ENCODE measurements at regions of chr21 and their contacts with region 1.

Region 1: DNA sequence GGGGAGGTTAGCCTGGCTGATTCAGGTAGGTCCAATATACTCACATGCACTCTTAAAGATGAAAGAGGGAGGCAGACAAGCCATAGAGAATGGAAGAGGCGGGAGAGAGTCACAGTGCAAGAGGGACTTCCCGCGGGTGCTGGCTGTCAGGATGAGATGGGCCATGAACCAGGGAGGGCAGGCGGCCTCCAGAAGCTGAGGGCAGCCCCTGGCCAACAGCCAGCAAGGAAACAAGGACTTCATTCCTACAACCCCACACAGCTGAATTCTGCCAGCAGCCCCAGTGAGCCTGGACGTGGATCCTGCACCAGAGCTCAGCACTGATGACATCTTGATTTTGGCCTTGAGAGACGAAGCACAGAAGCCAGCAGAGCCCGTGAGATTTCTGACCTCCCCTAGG is 15.1 kb upstream of the B3GALT5 start:
- DNase-seq: no peak
- ATAC-seq: no peak
- H3K4me3 ChIP-seq: no peak overlapping the region
- H3K27ac ChIP-seq: no peak overlapping the region
- H3K4me1 ChIP-seq: no peaks in the 10 kb centered on the region
- H3K27me3 ChIP-seq: no peaks in the 10 kb centered on the region
- CTCF ChIP-seq: no peak
- POLR2A ChIP-seq: no peak
- RAD21 ChIP-seq: no peak

Region 2: DNA sequence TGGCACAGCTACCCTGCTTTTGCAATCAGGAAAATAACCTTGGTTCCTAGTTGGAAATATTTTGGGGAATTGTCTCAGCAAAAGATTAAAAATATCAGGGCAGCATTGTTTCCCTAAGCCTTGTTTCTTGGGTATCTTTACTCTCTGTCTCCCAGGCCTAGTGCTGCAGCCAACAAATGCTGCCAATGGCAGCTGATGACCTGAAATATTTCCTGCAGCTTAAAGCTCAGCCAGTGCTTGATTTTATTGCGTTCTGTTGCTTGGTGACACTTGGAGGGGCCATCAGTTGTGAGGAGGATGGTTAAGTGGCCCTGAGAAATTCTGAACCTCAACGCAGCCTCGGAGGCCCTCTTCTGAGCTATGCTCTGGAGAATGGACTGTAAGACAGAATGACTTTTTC is 44.3 kb before region 1 on chr21:
- CTCF ChIA-PET with region 1: no interaction called
- POLR2A ChIA-PET with region 1: no interaction called
- RAD21 ChIA-PET with region 1: no interaction called
- intact Hi-C with region 1: no loop called
- DNase-seq: no peak
- ATAC-seq: no peak
- H3K4me3 ChIP-seq: no peak overlapping the region
- H3K27ac ChIP-seq: no peak overlapping the region
- H3K4me1 ChIP-seq: no peaks in the 10 kb centered on the region
- H3K27me3 ChIP-seq: no peaks in the 10 kb centered on the region
- CTCF ChIP-seq: no peak
- POLR2A ChIP-seq: no peak
- RAD21 ChIP-seq: no peak

Region 3: DNA sequence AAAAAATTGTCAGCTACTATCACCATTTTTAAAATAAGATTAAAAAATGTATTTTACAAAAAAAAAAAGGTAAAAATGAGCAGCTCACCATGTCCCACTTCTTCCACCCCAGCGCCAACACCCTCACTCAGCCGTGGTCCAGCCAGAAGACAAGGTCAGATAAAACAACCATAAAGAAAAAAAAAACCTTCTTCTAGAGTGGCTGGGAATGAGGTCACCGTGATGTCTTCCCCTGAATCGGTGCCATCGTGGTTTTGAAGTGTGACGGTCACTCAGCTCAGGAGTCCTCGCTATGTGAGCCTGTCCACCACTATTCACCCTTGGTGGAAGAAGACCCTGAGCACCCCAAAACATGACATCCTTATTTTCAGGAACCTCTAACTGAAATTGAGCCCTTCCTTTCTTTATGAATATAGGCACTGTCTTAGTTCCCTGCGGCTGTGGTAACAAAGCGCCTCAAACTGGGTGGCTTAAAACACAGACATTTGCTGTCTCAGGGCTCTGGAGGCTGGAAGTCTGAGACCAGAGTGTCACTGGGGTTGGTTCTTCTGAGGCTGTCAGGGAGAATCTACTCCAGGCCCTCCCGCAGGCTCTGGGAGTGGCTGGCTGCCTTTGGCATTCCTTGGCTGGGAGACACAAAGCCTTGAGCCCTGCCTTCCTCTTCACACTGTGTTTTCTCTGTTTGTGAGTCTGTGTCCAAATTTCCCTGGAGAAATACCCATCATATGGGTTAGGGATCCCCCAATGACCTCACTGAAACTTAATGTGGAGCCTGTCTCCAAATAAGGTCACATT is 53.4 kb after region 1 on chr21:
- CTCF ChIA-PET with region 1: no interaction called
- POLR2A ChIA-PET with region 1: no interaction called
- RAD21 ChIA-PET with region 1: no interaction called
- intact Hi-C with region 1: loop called (anchors 10 kb)
- DNase-seq: no peak
- ATAC-seq: no peak
- H3K4me3 ChIP-seq: no peak overlapping the region
- H3K27ac ChIP-seq: no peak overlapping the region
- H3K4me1 ChIP-seq: peaks cover 0 to 8% of the 10 kb centered on the region in 2 experiments; a peak in 2 of 4 replicates
- H3K27me3 ChIP-seq: no peaks in the 10 kb centered on the region
- CTCF ChIP-seq: no peak
- POLR2A ChIP-seq: no peak
- RAD21 ChIP-seq: no peak

Region 4: DNA sequence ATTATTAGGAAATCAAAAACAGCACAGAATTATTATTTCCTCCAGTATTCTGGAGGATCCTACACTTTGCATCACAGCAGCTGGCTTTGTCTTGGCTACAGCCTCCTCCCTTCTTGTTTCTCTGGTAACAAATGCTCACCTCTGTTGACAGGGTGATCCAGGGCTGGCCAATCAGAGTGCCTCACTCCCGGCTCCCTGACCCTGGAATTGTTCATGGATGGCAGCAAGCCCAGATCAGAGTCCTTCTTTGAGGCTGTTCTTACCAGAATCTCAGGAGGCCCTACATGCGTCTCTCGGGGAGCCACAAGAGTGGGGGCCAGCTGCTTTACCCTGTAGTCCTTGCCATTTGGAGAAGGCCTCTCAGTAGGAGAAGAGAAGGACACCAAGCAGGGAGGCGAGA is 99.0 kb after region 1 on chr21:
- CTCF ChIA-PET with region 1: no interaction called
- POLR2A ChIA-PET with region 1: no interaction called
- RAD21 ChIA-PET with region 1: no interaction called
- intact Hi-C with region 1: loop called (anchors 10 kb)
- DNase-seq: no peak
- ATAC-seq: no peak
- H3K4me3 ChIP-seq: no peak overlapping the region
- H3K27ac ChIP-seq: no peak overlapping the region
- H3K4me1 ChIP-seq: no peaks in the 10 kb centered on the region
- H3K27me3 ChIP-seq: no peaks in the 10 kb centered on the region
- CTCF ChIP-seq: no peak
- POLR2A ChIP-seq: no peak
- RAD21 ChIP-seq: no peak

Measured in HCT116 (cell line).